ENCODE measurements at regions of chrX and their contacts with region 1.

Region 1: GRCh38 chrX:40153335-40154249 is 55.8 kb upstream of the BCOR start:
- DNase-seq: peak; percentile 88
- H3K4me3 ChIP-seq: peak overlapping the region; percentile 0 to 71 (median 42)
- H3K27ac ChIP-seq: peak overlapping the region in 7 of 8 donors; percentile 13 to 78 (median 71)
- H3K4me1 ChIP-seq: peaks cover 0 to 94% (median 59%) of the 10 kb centered on the region in 6 donors
- H3K27me3 ChIP-seq: peaks cover 0 to 97% (median 34%) of the 10 kb centered on the region in 7 donors
- CTCF ChIP-seq: peak in 1 of 11 experiments; percentile 14
- POLR2A ChIP-seq: no peak

Region 2: DNA sequence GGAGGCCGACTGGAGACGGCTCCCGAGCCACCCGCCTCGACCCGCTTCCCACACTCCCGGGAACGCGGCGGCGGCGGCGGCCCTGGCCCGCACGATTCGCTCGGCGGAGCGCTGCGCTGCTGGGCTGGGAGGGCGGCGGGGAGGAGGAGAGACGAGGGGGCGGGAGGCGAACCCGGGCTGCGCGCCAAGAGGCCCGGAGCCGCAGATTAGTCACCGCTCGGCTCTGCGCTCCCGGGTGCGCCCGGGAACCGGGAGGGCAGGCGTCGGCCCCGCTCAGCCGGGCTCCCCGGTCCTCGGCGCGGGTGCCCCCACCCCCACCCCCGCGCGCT is 44.7 kb before region 1 on chrX:
- intact Hi-C with region 1: loop called (anchors 10 kb)
- DNase-seq: peak; percentile 88
- H3K4me3 ChIP-seq: peak overlapping the region; percentile 26 to 75 (median 48)
- H3K27ac ChIP-seq: peak overlapping the region in 7 of 8 donors; percentile 46 to 80 (median 69)
- H3K4me1 ChIP-seq: peaks cover 22 to 53% (median 30%) of the 10 kb centered on the region in 6 donors
- H3K27me3 ChIP-seq: peaks cover 0 to 69% (median 36%) of the 10 kb centered on the region in 7 donors
- CTCF ChIP-seq: no peak
- POLR2A ChIP-seq: no peak

Measured in spleen (tissue), 13 donors.